MCF 10A (cell line): ENCODE measurements at regions of chr9 and their contacts with region 1.

Region 1: DNA sequence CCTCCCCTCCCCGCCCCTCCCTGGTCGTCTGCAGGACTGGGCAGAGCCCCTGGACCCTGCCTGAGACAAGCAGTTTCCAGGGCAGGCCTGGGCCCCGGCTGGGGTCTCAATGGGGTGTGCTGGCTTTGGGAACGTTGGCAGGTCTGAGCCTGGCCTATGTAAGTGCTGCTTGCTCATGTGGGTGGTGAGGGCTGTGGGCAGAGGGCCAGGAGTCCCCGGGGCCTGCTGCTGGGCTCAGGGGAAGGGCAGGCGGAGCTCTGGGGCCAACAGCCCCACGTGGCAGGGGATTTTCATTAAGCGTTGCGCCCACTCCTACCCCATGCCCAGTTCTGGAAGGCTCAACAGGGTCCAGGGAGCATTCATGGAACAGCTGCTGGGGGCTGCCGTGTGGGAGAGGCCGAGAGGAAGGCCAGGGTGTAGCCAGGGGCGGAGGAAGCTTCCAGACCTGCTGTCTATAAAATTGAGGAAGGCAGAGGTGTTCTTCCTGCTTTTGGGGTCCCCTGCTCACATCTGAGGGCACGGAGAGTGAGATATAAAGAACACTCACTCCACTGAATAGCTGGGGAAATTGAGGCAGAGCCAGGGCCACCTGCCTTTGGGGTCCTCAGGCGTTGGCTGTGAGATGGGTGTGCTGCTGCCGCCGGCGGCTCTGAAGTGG is 32.5 kb downstream of the RXRA start:
- DNase-seq: peak; percentile 76
- H3K4me3 Mint-ChIP-seq: peak overlapping the region; percentile 53
- H3K27ac Mint-ChIP-seq: peak overlapping the region; percentile 95
- H3K4me1 Mint-ChIP-seq: peaks cover 51% of the 10 kb centered on the region
- H3K27me3 Mint-ChIP-seq: no peaks in the 10 kb centered on the region
- CTCF ChIP-seq: no peak

Region 2: DNA sequence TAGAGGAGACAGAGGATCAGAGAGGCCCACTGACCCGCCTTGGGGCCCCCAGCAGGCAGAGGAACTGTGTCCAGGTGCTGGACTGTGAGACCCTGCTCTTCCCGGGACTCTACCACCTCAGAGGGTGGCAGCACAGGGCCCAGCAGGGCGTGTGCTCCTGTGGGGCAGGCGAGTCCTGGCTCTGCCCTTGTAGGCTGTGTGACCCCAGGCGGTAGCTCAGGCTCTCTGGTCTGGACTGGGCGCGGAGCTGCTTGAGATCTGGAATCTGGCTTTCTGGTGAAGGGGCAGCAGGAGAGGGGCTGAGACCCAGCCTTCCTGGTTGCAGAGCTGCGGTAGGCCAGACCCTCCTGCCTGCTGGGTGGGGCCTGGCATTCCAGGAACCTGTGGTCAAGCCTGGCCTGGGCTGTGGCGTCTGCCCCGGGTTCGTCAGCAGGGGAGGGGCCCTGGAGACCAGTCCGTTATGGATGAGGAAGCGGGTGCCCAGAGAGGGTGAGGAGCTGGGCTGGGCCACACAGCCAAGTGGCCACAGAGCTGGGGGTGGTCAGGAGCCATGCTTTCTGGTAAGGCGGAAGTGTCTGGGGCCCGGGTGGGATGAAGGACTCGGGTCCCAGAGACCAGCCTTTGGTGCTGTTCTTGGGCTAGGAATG is 14.0 kb after region 1 on chr9:
- CTCF ChIA-PET with region 1: interaction called, 8 read pairs
- POLR2A ChIA-PET with region 1: interaction called, 37 read pairs
- intact Hi-C with region 1: no loop called
- DNase-seq: peak; percentile 82
- H3K4me3 Mint-ChIP-seq: peak overlapping the region; percentile 68
- H3K27ac Mint-ChIP-seq: peak overlapping the region; percentile 100
- H3K4me1 Mint-ChIP-seq: peaks cover 48% of the 10 kb centered on the region
- H3K27me3 Mint-ChIP-seq: no peaks in the 10 kb centered on the region
- CTCF ChIP-seq: no peak

Region 3: GRCh38 chr9:134443168-134444037 is 84.6 kb after region 1 on chr9:
- CTCF ChIA-PET with region 1: interaction called, 4 read pairs
- POLR2A ChIA-PET with region 1: interaction called, 3 read pairs
- intact Hi-C with region 1: loop called (anchors 5 kb)
- DNase-seq: peak; percentile 95
- H3K4me3 Mint-ChIP-seq: no peak overlapping the region
- H3K27ac Mint-ChIP-seq: no peak overlapping the region
- H3K4me1 Mint-ChIP-seq: peaks cover 12% of the 10 kb centered on the region
- H3K27me3 Mint-ChIP-seq: no peaks in the 10 kb centered on the region
- CTCF ChIP-seq: peak; percentile 97

Region 4: GRCh38 chr9:134689321-134690181 is 330.8 kb after region 1 on chr9:
- CTCF ChIA-PET with region 1: no interaction called
- POLR2A ChIA-PET with region 1: no interaction called
- intact Hi-C with region 1: no loop called
- DNase-seq: peak; percentile 48
- H3K4me3 Mint-ChIP-seq: no peak overlapping the region
- H3K27ac Mint-ChIP-seq: no peak overlapping the region
- H3K4me1 Mint-ChIP-seq: no peaks in the 10 kb centered on the region
- H3K27me3 Mint-ChIP-seq: peaks cover 19% of the 10 kb centered on the region
- CTCF ChIP-seq: peak; percentile 76